ENCODE measurements at regions of chr9 and their contacts with region 1.

Region 1: GRCh38 chr9:32855752-32856151 is 72.4 kb downstream of the TMEM215 start:
- DNase-seq: no peak
- ATAC-seq: no peak
- H3K4me3 Mint-ChIP-seq: no peak overlapping the region
- H3K27ac Mint-ChIP-seq: no peak overlapping the region
- H3K4me1 Mint-ChIP-seq: no peaks in the 10 kb centered on the region
- H3K27me3 Mint-ChIP-seq: peaks cover 2% of the 10 kb centered on the region

Region 2: GRCh38 chr9:32844259-32844658 is 11.5 kb before region 1 on chr9:
- CTCF ChIA-PET with region 1: interaction called, 3 read pairs
- POLR2A ChIA-PET with region 1: no interaction called
- intact Hi-C with region 1: loop called in 1 of 2 experiments (anchors 1 kb)
- DNase-seq: no peak
- ATAC-seq: no peak
- H3K4me3 Mint-ChIP-seq: no peak overlapping the region
- H3K27ac Mint-ChIP-seq: no peak overlapping the region
- H3K4me1 Mint-ChIP-seq: no peaks in the 10 kb centered on the region
- H3K27me3 Mint-ChIP-seq: peaks cover 20% of the 10 kb centered on the region